Activated B cell treated with CpG ODN at 0.5 μM for 24 hours (primary cell): ENCODE measurements at regions of chr17 and their contacts with region 1.

Region 1: DNA sequence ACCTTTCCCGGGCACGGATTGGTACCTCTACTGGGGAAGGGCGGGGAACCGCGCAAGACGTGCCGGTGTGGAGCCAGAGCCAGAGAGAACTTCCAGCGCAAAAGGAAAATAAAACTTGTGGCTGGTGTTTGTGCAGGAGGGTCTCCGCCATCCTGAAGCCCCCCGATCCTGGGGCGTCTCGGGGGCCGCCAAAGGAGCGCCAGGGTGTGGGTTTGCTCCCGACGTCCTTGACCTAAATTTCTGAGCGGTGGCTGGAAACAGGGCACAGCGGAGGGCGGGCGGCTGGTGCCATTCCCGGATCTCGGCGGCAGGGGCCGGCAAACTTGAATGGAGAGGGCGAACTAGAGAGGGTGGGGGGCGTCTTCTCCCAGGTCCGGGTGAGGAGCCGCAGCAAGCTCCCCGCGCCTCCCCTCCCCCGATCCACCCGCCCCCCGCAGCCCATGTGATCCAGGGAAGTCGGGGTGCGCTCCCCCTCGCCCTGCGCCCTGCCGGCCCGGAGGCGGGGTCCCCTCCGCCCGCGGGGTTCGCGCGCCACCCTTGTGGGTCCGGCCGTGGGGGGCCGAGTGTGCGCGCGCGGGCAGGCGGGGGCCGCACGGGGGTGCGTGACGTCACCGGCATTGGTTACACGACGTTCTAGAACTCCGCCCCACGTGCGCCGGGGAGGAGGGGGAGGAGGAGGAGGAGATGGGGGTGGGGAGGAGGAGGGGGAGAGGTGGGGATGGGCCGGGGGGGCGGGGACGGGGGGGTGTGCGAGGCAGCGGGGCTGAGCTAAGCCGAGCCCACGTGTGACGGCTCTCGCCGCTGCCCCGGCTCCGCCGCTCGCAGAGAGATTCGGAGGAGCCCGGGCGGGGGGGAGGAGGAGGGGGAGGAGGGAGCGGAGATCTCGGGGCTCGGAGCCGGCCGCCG is at the start of gene MSI2:
- DNase-seq: peak; percentile 86
- ATAC-seq: peak; percentile 79
- H3K4me3 Mint-ChIP-seq: peak within 1 kb of the TSS; percentile 94
- H3K27ac Mint-ChIP-seq: peak within 1 kb of the TSS; percentile 88
- H3K4me1 Mint-ChIP-seq: peaks cover 44% of the 10 kb centered on the region
- H3K27me3 Mint-ChIP-seq: no peaks in the 10 kb centered on the region
- CTCF ChIP-seq: no peak
- total RNA-seq, gene MSI2: 93.2 and 102 TPM in 2 replicates

Region 2: GRCh38 chr17:57243171-57243948 is 12.7 kb before region 1 on chr17:
- CTCF ChIA-PET with region 1: interaction called, 26 read pairs
- POLR2A ChIA-PET with region 1: interaction called, 8 read pairs
- intact Hi-C with region 1: loop called (anchors 1 kb)
- DNase-seq: peak; percentile 59
- ATAC-seq: peak; percentile 84
- H3K4me3 Mint-ChIP-seq: no peak overlapping the region
- H3K27ac Mint-ChIP-seq: peak overlapping the region; percentile 30
- H3K4me1 Mint-ChIP-seq: no peaks in the 10 kb centered on the region
- H3K27me3 Mint-ChIP-seq: peaks cover 6% of the 10 kb centered on the region
- CTCF ChIP-seq: peak; percentile 89

Region 3: GRCh38 chr17:57338257-57338914 is 82.4 kb after region 1 on chr17:
- CTCF ChIA-PET with region 1: no interaction called
- POLR2A ChIA-PET with region 1: interaction called, 3 read pairs
- intact Hi-C with region 1: loop called (anchors 5 kb)
- DNase-seq: peak; percentile 28
- ATAC-seq: peak; percentile 95
- H3K4me3 Mint-ChIP-seq: peak overlapping the region; percentile 58
- H3K27ac Mint-ChIP-seq: peak overlapping the region; percentile 36
- H3K4me1 Mint-ChIP-seq: peaks cover 26% of the 10 kb centered on the region
- H3K27me3 Mint-ChIP-seq: no peaks in the 10 kb centered on the region
- CTCF ChIP-seq: no peak

Region 4: DNA sequence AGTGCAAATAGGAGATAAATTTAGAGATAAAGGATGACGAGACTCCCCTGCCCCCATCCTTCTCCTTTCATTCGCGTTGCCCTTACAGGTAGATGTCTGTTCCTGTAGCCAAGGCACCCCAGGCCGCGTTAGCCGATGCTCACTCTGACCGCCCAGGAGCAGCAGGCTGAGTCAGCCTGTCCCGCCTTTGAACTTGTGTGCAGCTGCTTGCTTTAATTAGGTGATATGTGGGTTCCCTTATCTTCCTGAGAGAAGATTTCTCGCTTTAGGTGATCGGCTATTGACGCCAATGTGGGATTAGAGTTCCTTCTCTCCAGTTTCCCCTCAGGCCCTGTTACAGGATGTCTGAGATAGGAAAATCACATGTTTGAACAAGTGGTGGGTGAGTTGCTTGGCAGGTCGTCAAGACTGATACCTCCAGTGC is 119.8 kb after region 1 on chr17:
- CTCF ChIA-PET with region 1: no interaction called
- POLR2A ChIA-PET with region 1: no interaction called
- intact Hi-C with region 1: no loop called
- DNase-seq: no peak
- ATAC-seq: no peak
- H3K4me3 Mint-ChIP-seq: no peak overlapping the region
- H3K27ac Mint-ChIP-seq: no peak overlapping the region
- H3K4me1 Mint-ChIP-seq: peaks cover 13% of the 10 kb centered on the region
- H3K27me3 Mint-ChIP-seq: no peaks in the 10 kb centered on the region
- CTCF ChIP-seq: no peak

Region 5: DNA sequence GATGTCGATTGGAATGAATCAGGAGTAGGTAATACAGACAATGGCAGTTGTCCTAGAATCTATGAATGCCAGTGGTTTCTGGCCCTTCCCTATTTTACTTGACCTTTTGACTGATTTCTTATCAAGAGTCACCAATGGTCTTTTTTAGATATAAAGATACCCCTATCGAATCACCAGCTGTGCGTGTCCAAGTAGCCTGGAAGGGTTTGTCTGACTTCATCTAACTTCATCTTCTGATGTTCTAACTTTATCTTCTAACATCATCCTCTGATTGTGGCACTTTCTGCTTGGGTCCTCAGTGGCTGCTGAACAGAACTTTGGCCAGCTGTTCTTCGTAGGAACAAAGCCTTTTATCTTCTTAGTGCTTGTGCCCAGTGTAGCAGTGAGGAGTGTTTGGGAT is 129.9 kb after region 1 on chr17:
- CTCF ChIA-PET with region 1: no interaction called
- POLR2A ChIA-PET with region 1: no interaction called
- intact Hi-C with region 1: no loop called
- DNase-seq: no peak
- ATAC-seq: no peak
- H3K4me3 Mint-ChIP-seq: no peak overlapping the region
- H3K27ac Mint-ChIP-seq: no peak overlapping the region
- H3K4me1 Mint-ChIP-seq: peaks cover 15% of the 10 kb centered on the region
- H3K27me3 Mint-ChIP-seq: no peaks in the 10 kb centered on the region
- CTCF ChIP-seq: no peak

Region 6: DNA sequence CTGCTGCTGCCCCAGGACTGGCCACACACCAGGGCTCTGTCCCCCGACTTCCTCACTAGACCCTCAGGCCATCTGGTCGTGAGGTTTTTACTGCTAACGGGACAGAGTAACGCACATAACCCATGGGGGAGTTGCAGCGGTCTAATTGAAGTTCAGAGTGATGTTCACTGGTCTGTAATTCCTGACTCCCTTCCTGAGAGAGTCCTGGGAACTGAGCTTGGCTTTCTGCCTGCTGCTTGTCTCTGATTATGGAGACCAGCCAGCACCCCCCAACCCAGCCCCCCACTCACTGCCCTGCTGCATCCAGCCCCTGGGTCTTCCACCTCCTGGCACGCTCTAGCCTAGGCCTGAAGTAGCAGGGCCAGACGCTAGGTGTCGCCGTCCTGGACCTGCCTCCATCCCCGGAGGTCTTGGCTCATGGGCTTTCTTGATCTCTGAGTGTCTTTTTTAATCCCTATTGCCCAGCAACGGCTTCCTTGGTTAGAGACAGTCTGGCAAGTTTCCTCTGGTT is 296.1 kb after region 1 on chr17:
- CTCF ChIA-PET with region 1: interaction called, 3 read pairs
- POLR2A ChIA-PET with region 1: interaction called, 4 read pairs
- intact Hi-C with region 1: loop called (anchors 5 kb)
- DNase-seq: peak; percentile 46
- ATAC-seq: peak; percentile 56
- H3K4me3 Mint-ChIP-seq: peak overlapping the region; percentile 76
- H3K27ac Mint-ChIP-seq: peak overlapping the region; percentile 87
- H3K4me1 Mint-ChIP-seq: peaks cover 99% of the 10 kb centered on the region
- H3K27me3 Mint-ChIP-seq: no peaks in the 10 kb centered on the region
- CTCF ChIP-seq: no peak

Region 7: DNA sequence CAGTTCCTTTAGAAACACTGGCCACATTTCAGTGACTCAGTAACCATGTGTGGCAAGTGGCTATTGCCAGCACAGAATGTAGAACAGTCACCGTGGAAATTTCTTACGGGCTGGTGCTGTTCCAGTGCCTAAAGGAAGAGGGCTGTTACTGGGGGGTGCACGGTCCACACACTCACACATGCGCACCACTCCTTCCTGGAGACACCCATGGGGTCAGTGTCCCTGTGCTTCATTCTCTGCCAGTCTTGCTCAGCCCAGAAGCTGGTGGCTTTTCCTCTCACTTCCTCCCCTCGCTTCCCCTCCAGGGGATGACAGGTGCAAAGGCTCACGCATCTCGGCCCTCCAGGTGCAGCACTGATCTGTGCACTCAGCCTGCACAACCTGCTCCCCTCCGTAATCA is 373.4 kb after region 1 on chr17:
- CTCF ChIA-PET with region 1: no interaction called
- POLR2A ChIA-PET with region 1: interaction called, 3 read pairs
- intact Hi-C with region 1: loop called (anchors 1 kb)
- DNase-seq: peak; percentile 54
- ATAC-seq: peak; percentile 91
- H3K4me3 Mint-ChIP-seq: peak overlapping the region; percentile 57
- H3K27ac Mint-ChIP-seq: peak overlapping the region; percentile 83
- H3K4me1 Mint-ChIP-seq: peaks cover 66% of the 10 kb centered on the region
- H3K27me3 Mint-ChIP-seq: no peaks in the 10 kb centered on the region
- CTCF ChIP-seq: no peak

Region 8: GRCh38 chr17:57987580-57988421 is 731.8 kb after region 1 on chr17 and contains the start of gene VEZF1:
- CTCF ChIA-PET with region 1: no interaction called
- POLR2A ChIA-PET with region 1: interaction called, 3 read pairs
- intact Hi-C with region 1: loop called (anchors 5 kb)
- DNase-seq: peak; percentile 82
- ATAC-seq: peak; percentile 73
- H3K4me3 Mint-ChIP-seq: peak within 1 kb of the TSS; percentile 94
- H3K27ac Mint-ChIP-seq: peak within 1 kb of the TSS; percentile 93
- H3K4me1 Mint-ChIP-seq: peaks cover 54% of the 10 kb centered on the region
- H3K27me3 Mint-ChIP-seq: no peaks in the 10 kb centered on the region
- CTCF ChIP-seq: no peak
- total RNA-seq, gene VEZF1: 40.5 and 45.1 TPM in 2 replicates